IMR-90 (cell line): ENCODE measurements at regions of chr19 and their contacts with region 1.

Region 1: GRCh38 chr19:8389891-8390616 is at the start of gene RAB11B:
- DNase-seq: peak; percentile 99
- ATAC-seq: peak; percentile 96
- H3K4me3 ChIP-seq: peak within 1 kb of the TSS; percentile 72
- H3K27ac ChIP-seq: peak within 1 kb of the TSS; percentile 86
- H3K4me1 ChIP-seq: peaks cover 16% of the 10 kb centered on the region
- H3K27me3 ChIP-seq: no peaks in the 10 kb centered on the region
- CTCF ChIP-seq: no peak
- POLR2A ChIP-seq: peak; percentile 87
- RAD21 ChIP-seq: no peak
- total RNA-seq, gene RAB11B: 8.2 and 12.2 TPM in 2 replicates

Region 2: DNA sequence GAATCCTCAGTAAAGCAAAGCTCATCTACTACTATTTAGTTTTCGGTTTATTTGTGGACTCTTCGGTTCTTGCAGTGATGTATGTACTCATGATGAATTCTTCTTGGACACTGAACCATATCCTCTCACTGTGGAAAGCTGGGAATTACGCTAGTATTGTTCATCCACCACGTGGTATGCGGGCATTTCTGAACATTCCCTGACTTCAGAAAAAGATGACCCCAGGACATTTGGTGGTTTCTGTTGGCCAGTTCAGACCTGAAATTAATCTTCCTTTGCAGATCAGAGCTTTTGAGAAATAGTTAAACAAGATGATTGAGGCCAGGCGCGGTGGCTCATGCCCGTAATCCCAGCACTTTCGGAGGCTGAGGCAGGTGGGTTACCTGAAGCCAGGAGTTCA is 215.3 kb before region 1 on chr19:
- CTCF ChIA-PET with region 1: no interaction called
- POLR2A ChIA-PET with region 1: no interaction called
- dilution Hi-C with region 1: no loop called
- in situ Hi-C with region 1: no loop called
- intact Hi-C with region 1: no loop called
- DNase-seq: peak; percentile 31
- ATAC-seq: no peak
- H3K4me3 ChIP-seq: no peak overlapping the region
- H3K27ac ChIP-seq: no peak overlapping the region
- H3K4me1 ChIP-seq: no peaks in the 10 kb centered on the region
- H3K27me3 ChIP-seq: peaks cover 2% of the 10 kb centered on the region
- CTCF ChIP-seq: no peak
- POLR2A ChIP-seq: no peak
- RAD21 ChIP-seq: no peak

Region 3: GRCh38 chr19:8367327-8368001 is 22.6 kb before region 1 on chr19:
- CTCF ChIA-PET with region 1: no interaction called
- POLR2A ChIA-PET with region 1: no interaction called
- dilution Hi-C with region 1: no loop called
- in situ Hi-C with region 1: no loop called
- intact Hi-C with region 1: loop called (anchors 1 kb)
- DNase-seq: peak; percentile 98
- ATAC-seq: peak; percentile 82
- H3K4me3 ChIP-seq: no peak overlapping the region
- H3K27ac ChIP-seq: peak overlapping the region; percentile 57; the same call in 1 of the 2 replicates
- H3K4me1 ChIP-seq: peaks cover 26% of the 10 kb centered on the region
- H3K27me3 ChIP-seq: no peaks in the 10 kb centered on the region
- CTCF ChIP-seq: no peak
- POLR2A ChIP-seq: no peak
- RAD21 ChIP-seq: peak; percentile 33